Right ventricle myocardium superior (tissue), 1 donor: ENCODE measurements at regions of chr3 and their contacts with region 1.

Region 1: GRCh38 chr3:52238761-52239701 is at the start of gene TWF2:
- DNase-seq: peak; percentile 90
- ATAC-seq: peak; percentile 87
- total RNA-seq, gene TWF2: 131 TPM

Region 2: DNA sequence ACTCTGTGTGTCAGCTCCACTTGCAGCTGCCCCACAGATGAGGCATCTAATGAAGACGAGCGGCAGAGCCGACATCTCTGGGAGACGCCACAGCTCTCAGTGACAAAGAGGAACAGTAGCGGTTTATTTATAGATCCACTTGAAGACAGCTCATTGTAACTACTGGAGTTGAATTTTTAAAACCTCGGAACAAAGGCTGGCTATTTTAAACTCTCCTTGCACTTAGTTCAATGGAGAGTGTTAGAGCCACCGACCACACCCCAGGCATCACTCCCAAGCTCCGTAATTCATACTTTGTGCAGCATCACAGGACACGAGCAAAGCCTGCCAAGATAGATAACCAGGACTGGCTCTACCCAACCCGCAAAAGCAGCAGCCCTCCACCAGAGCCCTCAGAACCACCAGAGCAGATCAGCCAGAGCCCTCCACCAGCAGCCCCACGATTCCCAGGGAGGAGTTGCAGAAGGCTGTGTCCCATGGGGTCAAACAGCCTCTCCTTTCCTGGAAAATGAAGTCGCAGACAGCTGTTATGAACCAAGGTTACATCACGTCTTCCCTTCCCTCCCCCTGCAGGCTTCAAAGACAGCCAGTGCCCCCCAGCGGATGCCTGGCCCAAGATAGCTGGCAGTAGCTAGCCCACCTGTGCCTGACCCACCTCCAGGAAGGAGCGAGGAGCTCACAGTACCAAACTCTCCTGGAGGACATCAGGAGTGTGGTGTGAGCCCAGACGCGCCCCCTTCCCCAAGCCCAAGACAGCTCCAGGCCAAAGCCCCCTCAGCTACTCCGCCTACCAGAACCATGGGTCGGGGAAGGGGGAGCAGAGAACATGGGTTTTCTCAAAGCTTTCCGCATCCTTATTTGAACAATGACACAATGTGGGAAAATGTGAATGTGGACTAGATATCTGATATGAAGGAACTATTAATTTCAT is 130.5 kb before region 1 on chr3:
- intact Hi-C with region 1: no loop called
- DNase-seq: peak; percentile 58
- ATAC-seq: peak; percentile 79

Region 3: GRCh38 chr3:52278510-52279069 is 39.6 kb after region 1 on chr3 and contains the start of gene WDR82:
- intact Hi-C with region 1: loop called (anchors 5 kb)
- DNase-seq: peak; percentile 99
- ATAC-seq: peak; percentile 97
- total RNA-seq, gene WDR82: 61.0 TPM